ENCODE measurements at regions of chr2 and their contacts with region 1.

Region 1: DNA sequence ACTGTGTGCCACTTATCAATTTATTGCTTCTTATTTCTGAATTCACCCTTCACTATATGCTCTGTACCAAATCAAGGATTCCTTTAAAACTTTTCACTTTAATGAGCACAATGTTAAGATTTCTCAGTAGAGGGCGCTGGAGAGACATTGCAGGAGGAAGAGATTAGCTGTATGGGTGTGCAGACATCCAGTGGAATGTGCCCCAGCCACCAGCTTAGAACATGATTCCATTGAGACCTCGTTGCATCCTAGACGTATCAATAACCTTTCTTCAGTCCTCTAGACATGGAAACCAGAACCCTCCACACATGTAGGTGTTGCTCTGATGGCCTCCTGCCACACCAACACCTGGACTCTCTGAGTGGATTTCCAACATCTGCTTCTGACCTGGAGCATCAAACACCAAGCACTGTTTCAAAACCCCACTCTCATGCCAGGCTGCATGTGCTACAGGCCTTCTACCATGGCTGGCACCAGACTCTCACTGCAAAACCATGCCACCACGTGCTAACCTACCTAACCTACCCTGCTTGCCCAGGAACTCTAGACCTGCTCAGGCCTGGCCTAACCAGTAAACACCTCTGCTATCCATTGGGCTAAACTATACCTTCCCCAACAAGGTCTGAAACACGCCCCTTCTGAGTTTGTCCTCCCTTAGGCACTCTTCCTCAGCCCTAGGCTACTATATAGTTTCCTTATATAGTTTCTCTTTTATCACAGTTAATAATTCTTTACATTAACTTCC is 633.2 kb upstream of the PKDCC start:
- DNase-seq: no peak

Region 2: DNA sequence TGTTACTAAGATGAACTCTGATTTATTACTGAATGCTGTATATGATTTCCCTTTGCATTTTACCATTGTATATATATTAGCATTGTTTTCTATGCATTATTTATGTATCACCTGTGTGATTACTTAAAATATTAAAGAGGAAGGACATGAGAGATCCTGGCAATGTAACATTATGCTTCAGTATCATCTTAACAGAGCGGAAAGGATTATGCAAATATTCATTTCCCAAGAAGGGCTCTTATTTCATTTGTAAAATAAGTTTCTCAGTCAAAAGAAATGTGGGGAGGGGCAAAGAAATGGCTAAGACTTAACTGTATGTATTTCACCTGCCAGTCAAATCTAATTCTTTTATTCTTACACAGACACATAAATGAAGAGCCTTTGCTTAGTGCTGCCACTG is 21.0 kb before region 1 on chr2:
- intact Hi-C with region 1: loop called in 1 of 2 experiments (anchors 2 kb)
- DNase-seq: no peak

Region 3: DNA sequence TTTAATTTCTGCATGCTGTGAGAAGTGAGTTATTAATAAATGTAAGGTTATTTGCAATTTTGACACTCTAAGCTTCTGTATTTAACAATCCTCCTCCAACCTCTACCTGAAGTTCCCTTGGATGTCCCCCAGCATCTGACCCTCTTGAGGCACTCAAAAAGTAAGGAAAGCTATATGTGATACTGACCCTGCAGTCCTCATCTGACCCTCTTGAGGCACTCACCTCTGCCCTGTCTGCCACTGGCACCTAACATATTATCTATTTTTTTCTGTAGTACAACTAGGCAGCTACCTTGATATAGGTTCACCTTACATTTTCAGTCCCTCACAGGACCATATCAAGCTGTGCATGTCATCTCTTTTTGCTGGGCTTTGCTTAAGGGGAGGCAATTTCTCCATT is 49.7 kb after region 1 on chr2:
- intact Hi-C with region 1: no loop called
- DNase-seq: no peak

Region 4: GRCh38 chr2:41698678-41699422 is 284.2 kb after region 1 on chr2:
- intact Hi-C with region 1: loop called in 1 of 2 experiments (anchors 10 kb)
- DNase-seq: peak; percentile 80

Measured in posterior vena cava (tissue), 2 donors.